ENCODE measurements at regions of chr9 and their contacts with region 1.

Region 1: GRCh38 chr9:15135164-15135792 is 171.7 kb downstream of the TTC39B start:
- DNase-seq: peak; percentile 73
- ATAC-seq: peak; percentile 70
- H3K4me3 Mint-ChIP-seq: no peak overlapping the region
- H3K27ac Mint-ChIP-seq: peak overlapping the region; percentile 94
- H3K4me1 Mint-ChIP-seq: peaks cover 49% of the 10 kb centered on the region
- H3K27me3 Mint-ChIP-seq: no peaks in the 10 kb centered on the region
- CTCF ChIP-seq: peak; percentile 77

Region 2: GRCh38 chr9:14846871-14847311 is 288.4 kb before region 1 on chr9:
- CTCF ChIA-PET with region 1: interaction called, 12 read pairs
- POLR2A ChIA-PET with region 1: no interaction called
- DNase-seq: peak; percentile 90
- ATAC-seq: peak; percentile 100
- H3K4me3 Mint-ChIP-seq: no peak overlapping the region
- H3K27ac Mint-ChIP-seq: no peak overlapping the region
- H3K4me1 Mint-ChIP-seq: 0 out of 2 replicates have a peak, but pooled peaks cover 3% of the 10 kb centered on the region
- H3K27me3 Mint-ChIP-seq: no peaks in the 10 kb centered on the region
- CTCF ChIP-seq: peak; percentile 77

Region 3: GRCh38 chr9:15104826-15105420 is 30.4 kb before region 1 on chr9:
- CTCF ChIA-PET with region 1: interaction called, 43 read pairs
- POLR2A ChIA-PET with region 1: no interaction called
- DNase-seq: peak; percentile 24
- ATAC-seq: peak; percentile 99
- H3K4me3 Mint-ChIP-seq: no peak overlapping the region
- H3K27ac Mint-ChIP-seq: no peak overlapping the region
- H3K4me1 Mint-ChIP-seq: peaks cover 9% of the 10 kb centered on the region
- H3K27me3 Mint-ChIP-seq: peaks cover 5% of the 10 kb centered on the region; the same call in 1 of the 2 replicates
- CTCF ChIP-seq: peak; percentile 66

Region 4: DNA sequence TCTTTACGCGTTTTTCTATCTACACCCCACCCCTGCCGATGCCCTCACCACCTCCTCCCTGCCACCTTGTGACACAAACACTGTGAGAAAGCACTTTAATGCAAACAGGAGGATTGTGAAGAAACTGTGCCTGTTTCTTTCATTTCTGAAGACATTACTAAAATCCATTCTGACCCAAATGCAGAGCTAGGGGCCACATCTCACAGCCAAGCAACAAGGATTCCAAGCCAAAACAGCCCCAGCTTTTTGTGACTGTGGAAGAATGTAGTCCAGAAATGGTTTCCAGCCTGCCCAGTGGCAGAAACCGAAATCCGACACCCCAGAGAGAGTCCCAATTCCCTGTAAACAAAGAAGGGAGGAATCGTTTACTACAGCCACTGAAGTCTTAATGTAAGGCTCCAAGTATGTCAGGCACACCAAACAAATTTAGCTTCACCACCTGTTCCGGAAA is 19.1 kb before region 1 on chr9:
- CTCF ChIA-PET with region 1: interaction called, 17 read pairs
- POLR2A ChIA-PET with region 1: no interaction called
- DNase-seq: no peak
- ATAC-seq: peak; percentile 71
- H3K4me3 Mint-ChIP-seq: no peak overlapping the region; the same call in 1 of the 2 replicates
- H3K27ac Mint-ChIP-seq: peak overlapping the region; percentile 43
- H3K4me1 Mint-ChIP-seq: peaks cover 35% of the 10 kb centered on the region
- H3K27me3 Mint-ChIP-seq: no peaks in the 10 kb centered on the region
- CTCF ChIP-seq: no peak

Region 5: DNA sequence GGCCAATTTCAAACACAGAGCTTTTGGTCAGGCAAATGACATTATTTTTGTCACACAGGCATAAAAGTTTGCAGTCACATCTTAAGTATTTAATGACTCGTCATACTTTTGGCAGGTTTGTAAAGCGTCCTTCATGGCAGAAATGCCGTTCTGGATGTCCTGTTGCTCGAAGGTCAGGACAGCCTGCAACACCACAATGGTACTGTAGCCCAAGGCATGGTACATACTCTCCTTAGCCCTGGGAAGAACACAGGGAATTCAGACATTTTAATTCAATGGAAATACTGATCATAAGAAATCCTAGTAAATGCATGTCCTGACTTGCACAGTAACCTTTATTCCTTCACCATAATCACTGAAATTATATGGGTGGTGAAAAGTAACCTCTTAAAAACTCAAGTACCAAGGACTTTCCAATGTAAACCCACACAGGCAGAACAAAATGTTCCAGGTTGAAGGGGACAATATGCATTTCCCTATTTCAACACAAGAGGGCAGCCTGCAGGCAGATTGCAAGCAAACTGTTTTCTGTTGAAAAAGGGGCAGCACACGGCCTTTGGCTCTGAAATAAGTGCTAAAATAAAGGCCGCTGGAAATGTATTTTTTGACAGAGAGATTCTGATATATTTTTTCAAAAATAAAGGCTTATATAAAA is 76.0 kb after region 1 on chr9:
- CTCF ChIA-PET with region 1: interaction called, 5 read pairs
- POLR2A ChIA-PET with region 1: interaction called, 11 read pairs
- DNase-seq: peak; percentile 57
- ATAC-seq: peak; percentile 80
- H3K4me3 Mint-ChIP-seq: no peak overlapping the region
- H3K27ac Mint-ChIP-seq: no peak overlapping the region
- H3K4me1 Mint-ChIP-seq: peaks cover 38% of the 10 kb centered on the region
- H3K27me3 Mint-ChIP-seq: no peaks in the 10 kb centered on the region
- CTCF ChIP-seq: peak; percentile 79

Region 6: DNA sequence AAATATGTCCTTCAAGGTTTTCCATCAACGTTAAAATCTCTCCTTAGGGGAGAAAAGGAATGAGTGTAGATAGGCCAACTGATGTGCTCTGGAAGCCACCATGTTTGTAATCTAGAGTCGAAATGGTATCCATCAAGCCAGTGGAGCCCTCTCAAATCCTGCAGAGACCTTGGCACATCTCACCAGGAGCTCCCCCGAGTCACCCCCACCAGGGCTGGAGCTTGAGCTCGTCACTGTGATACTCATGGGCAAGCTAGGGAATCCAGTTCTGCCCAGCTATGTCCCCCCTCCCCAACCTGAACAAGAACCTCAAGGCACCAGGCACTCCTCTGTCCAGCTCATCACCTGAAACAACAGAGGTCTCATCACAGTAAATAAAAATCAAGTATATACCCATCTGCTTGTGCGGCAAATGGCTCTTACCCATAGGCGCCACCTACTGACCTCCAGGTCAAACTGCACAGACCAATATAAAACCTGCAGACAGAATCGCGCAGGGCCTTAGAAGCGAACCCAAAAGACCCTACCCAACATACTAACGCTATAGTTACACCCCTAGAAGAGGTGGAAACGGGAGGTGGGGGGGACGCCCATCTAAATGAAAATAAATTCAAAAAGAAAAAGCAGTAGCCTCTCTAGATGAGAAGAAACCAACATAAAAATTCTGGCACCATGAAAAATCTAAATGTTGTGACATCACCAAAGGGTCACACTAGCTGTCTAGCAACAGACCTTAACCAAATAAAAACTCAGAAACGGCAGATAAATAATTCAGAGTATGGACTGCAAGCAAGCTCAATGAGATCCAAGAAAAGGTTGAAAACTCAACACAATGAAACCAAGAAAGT is 96.7 kb after region 1 on chr9:
- CTCF ChIA-PET with region 1: interaction called, 11 read pairs
- POLR2A ChIA-PET with region 1: no interaction called
- DNase-seq: peak; percentile 41
- ATAC-seq: peak; percentile 98
- H3K4me3 Mint-ChIP-seq: no peak overlapping the region
- H3K27ac Mint-ChIP-seq: no peak overlapping the region
- H3K4me1 Mint-ChIP-seq: peaks cover 5% of the 10 kb centered on the region; the same call in 1 of the 2 replicates
- H3K27me3 Mint-ChIP-seq: no peaks in the 10 kb centered on the region
- CTCF ChIP-seq: peak; percentile 72

Measured in WTC11 (cell line).